ENCODE measurements at regions of chr12 and their contacts with region 1.

Region 1: GRCh38 chr12:57583008-57583831 is 7.8 kb upstream of the PIP4K2C start:
- DNase-seq: peak; percentile 90
- CTCF ChIP-seq: peak; percentile 98

Region 2: GRCh38 chr12:57511588-57512325 is 71.5 kb before region 1 on chr12:
- CTCF ChIA-PET with region 1: no interaction called
- POLR2A ChIA-PET with region 1: no interaction called
- DNase-seq: no peak
- CTCF ChIP-seq: no peak

Region 3: GRCh38 chr12:57546438-57547383 is 36.5 kb before region 1 on chr12 and contains the start of gene DCTN2:
- CTCF ChIA-PET with region 1: interaction called, 19 read pairs
- POLR2A ChIA-PET with region 1: no interaction called
- DNase-seq: peak; percentile 98
- CTCF ChIP-seq: peak; percentile 29

Region 4: DNA sequence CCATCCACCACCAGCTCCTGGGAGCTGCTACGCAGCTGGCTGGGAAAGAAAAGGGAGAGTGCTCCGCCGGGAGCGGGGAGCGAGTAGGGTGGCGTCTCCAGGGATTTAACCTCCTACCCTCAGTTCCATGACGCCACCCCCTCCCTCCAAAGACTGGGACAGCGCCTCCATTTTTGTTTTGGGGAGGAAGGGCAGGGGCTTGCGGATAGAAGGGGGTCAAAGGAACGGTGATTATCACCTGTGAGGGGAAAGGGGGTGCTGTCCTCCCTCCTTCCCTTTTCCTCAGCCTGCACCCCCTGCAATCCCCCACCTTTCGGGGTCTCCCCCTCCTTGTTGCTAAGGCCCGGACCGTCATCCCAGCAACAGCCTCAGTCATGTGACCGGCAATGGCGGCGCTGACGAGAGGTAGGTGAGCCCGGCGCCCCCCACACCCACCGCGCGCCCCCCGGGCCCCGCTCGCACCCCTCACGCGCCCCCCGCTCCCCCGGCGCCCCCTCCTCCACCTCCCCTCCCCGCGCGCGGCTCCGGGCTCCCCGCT is 21.3 kb after region 1 on chr12 and contains the start of gene DTX3:
- CTCF ChIA-PET with region 1: interaction called, 47 read pairs
- POLR2A ChIA-PET with region 1: interaction called, 3 read pairs
- DNase-seq: peak; percentile 77
- CTCF ChIP-seq: no peak

Region 5: DNA sequence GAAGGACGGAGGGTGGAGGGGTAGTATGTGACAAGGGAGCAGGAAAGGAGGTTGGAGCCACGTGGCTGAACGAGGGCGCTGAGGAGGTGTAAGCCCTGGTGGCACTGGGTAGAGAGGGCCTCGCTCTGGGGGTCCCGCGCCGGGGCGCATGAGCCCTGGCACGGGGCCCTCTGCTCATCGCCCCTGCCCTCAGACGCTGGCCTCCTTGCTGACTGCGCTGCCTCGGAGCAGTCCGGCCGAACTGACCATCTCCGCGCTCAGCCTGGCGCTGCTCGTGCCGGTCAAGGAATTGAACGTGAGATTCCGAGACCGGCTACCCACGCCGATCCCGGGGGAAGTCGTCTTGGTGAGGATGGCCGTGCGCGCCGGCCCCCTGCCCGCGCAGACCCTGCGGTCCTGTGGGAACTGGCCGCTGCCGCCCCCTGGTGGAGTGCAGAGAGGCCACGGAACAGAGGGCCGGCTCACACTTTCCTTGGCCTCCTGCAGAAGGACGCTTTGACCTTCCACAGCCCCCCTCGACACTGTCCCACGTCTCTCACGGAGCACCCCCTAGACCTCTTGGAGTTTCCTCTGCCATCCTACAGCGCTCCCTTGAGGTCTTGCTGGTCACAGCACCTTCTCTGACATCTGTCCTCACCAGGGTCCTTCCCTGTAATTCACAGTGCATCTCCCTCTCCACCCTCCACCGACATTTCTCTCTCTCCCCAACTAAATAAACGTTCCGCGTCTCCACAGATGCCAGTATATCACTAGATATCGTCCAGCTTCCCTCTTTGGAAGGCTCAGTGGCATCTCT is 38.5 kb after region 1 on chr12:
- CTCF ChIA-PET with region 1: interaction called, 155 read pairs
- POLR2A ChIA-PET with region 1: no interaction called
- DNase-seq: peak; percentile 83
- CTCF ChIP-seq: peak; percentile 95

Region 6: GRCh38 chr12:57632694-57633477 is 49.7 kb after region 1 on chr12 and contains the start of gene B4GALNT1:
- CTCF ChIA-PET with region 1: interaction called, 71 read pairs
- POLR2A ChIA-PET with region 1: no interaction called
- DNase-seq: peak; percentile 85
- CTCF ChIP-seq: peak; percentile 86

Region 7: GRCh38 chr12:57735952-57736740 is 152.9 kb after region 1 on chr12:
- CTCF ChIA-PET with region 1: interaction called, 19 read pairs
- POLR2A ChIA-PET with region 1: no interaction called
- DNase-seq: no peak
- CTCF ChIP-seq: no peak

Region 8: GRCh38 chr12:57750561-57751431 is 167.6 kb after region 1 on chr12:
- CTCF ChIA-PET with region 1: no interaction called
- POLR2A ChIA-PET with region 1: no interaction called
- DNase-seq: no peak
- CTCF ChIP-seq: no peak

Region 9: DNA sequence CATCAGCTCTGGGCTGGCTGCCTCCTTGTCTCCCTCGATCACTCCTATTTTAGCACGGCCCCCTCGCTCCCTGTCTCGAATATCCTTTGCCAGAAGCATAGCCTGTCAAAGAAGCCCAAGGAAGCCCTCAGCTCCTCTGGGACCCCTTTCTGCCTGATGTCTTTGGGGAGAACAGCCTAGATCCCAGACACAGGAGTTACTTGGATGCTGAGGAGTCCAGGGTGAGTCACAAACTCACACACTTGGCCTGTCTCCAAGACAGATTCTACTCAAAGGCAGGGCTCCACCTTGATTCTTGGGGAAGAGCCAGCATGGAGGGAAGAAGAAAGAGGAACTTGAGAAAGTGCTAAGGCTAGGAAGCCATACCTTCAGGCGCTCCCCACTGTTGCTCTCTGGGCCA is 227.2 kb after region 1 on chr12:
- CTCF ChIA-PET with region 1: no interaction called
- POLR2A ChIA-PET with region 1: no interaction called
- DNase-seq: no peak
- CTCF ChIP-seq: no peak